ENCODE measurements at regions of chr10 and their contacts with region 1.

Region 1: GRCh38 chr10:63166742-63167258 is 33.7 kb downstream of the NRBF2 start:
- DNase-seq: no peak
- ATAC-seq: peak; percentile 59
- H3K4me3 Mint-ChIP-seq: no peak overlapping the region
- H3K27ac Mint-ChIP-seq: no peak overlapping the region
- H3K4me1 Mint-ChIP-seq: peaks cover 44% of the 10 kb centered on the region
- H3K27me3 Mint-ChIP-seq: no peaks in the 10 kb centered on the region

Region 2: GRCh38 chr10:63030541-63030940 is 136.3 kb before region 1 on chr10:
- CTCF ChIA-PET with region 1: no interaction called
- DNase-seq: no peak
- ATAC-seq: no peak
- H3K4me3 Mint-ChIP-seq: no peak overlapping the region
- H3K27ac Mint-ChIP-seq: no peak overlapping the region
- H3K4me1 Mint-ChIP-seq: peaks cover 1% of the 10 kb centered on the region
- H3K27me3 Mint-ChIP-seq: peaks cover 16% of the 10 kb centered on the region

Region 3: GRCh38 chr10:63145782-63146181 is 21.0 kb before region 1 on chr10:
- CTCF ChIA-PET with region 1: interaction called, 12 read pairs
- DNase-seq: no peak
- ATAC-seq: peak; percentile 45
- H3K4me3 Mint-ChIP-seq: no peak overlapping the region
- H3K27ac Mint-ChIP-seq: no peak overlapping the region
- H3K4me1 Mint-ChIP-seq: peaks cover 31% of the 10 kb centered on the region
- H3K27me3 Mint-ChIP-seq: no peaks in the 10 kb centered on the region

Region 4: DNA sequence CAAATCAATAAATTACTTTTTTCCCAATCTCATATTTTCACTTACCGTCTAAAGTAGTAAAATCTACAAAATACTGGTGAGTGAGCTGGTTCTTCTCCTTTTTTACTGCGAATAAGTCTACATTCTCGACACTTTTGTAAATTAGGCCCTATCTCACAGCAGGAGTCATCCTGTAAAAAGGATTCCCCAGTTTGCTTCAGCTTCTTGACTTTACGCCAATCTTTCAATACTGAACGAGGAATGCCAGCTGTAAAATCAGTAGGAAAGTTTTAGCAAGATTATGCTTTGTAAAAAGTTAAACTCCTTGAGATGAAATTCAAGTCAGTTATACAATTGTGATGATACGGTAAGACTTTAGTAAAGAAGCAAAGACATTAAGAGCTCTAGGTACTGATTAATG is 33.6 kb after region 1 on chr10:
- CTCF ChIA-PET with region 1: interaction called, 11 read pairs
- DNase-seq: no peak
- ATAC-seq: no peak
- H3K4me3 Mint-ChIP-seq: no peak overlapping the region
- H3K27ac Mint-ChIP-seq: no peak overlapping the region
- H3K4me1 Mint-ChIP-seq: peaks cover 17% of the 10 kb centered on the region
- H3K27me3 Mint-ChIP-seq: no peaks in the 10 kb centered on the region

Region 5: GRCh38 chr10:63217120-63217605 is 50.4 kb after region 1 on chr10:
- CTCF ChIA-PET with region 1: interaction called, 19 read pairs
- DNase-seq: no peak
- ATAC-seq: peak; percentile 82
- H3K4me3 Mint-ChIP-seq: no peak overlapping the region
- H3K27ac Mint-ChIP-seq: peak overlapping the region; percentile 42
- H3K4me1 Mint-ChIP-seq: peaks cover 60% of the 10 kb centered on the region
- H3K27me3 Mint-ChIP-seq: no peaks in the 10 kb centered on the region

Region 6: GRCh38 chr10:63250032-63250431 is 83.2 kb after region 1 on chr10:
- CTCF ChIA-PET with region 1: no interaction called
- DNase-seq: no peak
- ATAC-seq: no peak
- H3K4me3 Mint-ChIP-seq: no peak overlapping the region
- H3K27ac Mint-ChIP-seq: no peak overlapping the region
- H3K4me1 Mint-ChIP-seq: peaks cover 27% of the 10 kb centered on the region
- H3K27me3 Mint-ChIP-seq: no peaks in the 10 kb centered on the region

Region 7: GRCh38 chr10:63720072-63720537 is 553.3 kb after region 1 on chr10:
- CTCF ChIA-PET with region 1: interaction called, 106 read pairs
- DNase-seq: peak; percentile 64
- ATAC-seq: peak; percentile 63
- H3K4me3 Mint-ChIP-seq: no peak overlapping the region
- H3K27ac Mint-ChIP-seq: no peak overlapping the region
- H3K4me1 Mint-ChIP-seq: peaks cover 23% of the 10 kb centered on the region
- H3K27me3 Mint-ChIP-seq: peaks cover 8% of the 10 kb centered on the region